ENCODE measurements at regions of chrX and their contacts with region 1.

Region 1: GRCh38 chrX:40013266-40014195 is 84.2 kb downstream of the BCOR start:
- DNase-seq: peak; percentile 88
- H3K4me3 ChIP-seq: peak overlapping the region; percentile 51 to 64 (median 58)
- H3K27ac ChIP-seq: peak overlapping the region; percentile 83 to 91 (median 90)
- H3K4me1 ChIP-seq: peaks cover 0 to 42% (median 14%) of the 10 kb centered on the region in 4 donors
- H3K27me3 ChIP-seq: peaks cover 0 to 4% (median 0%) of the 10 kb centered on the region in 3 donors
- CTCF ChIP-seq: no peak
- EP300 ChIP-seq: peak in 1 of 4 donors; percentile 22
- POLR2A ChIP-seq: no peak

Region 2: GRCh38 chrX:39730662-39731397 is 282.7 kb before region 1 on chrX:
- intact Hi-C with region 1: loop called (anchors 5 kb)
- DNase-seq: peak; percentile 94
- H3K4me3 ChIP-seq: no peak overlapping the region
- H3K27ac ChIP-seq: peak overlapping the region in 3 of 4 donors; percentile 63 to 67 (median 65)
- H3K4me1 ChIP-seq: peaks cover 0 to 37% (median 18%) of the 10 kb centered on the region in 4 donors
- H3K27me3 ChIP-seq: no peaks in the 10 kb centered on the region
- CTCF ChIP-seq: peak in 3 of 4 experiments; percentile 4 to 51 (median 21)
- EP300 ChIP-seq: peak; percentile 17 to 65 (median 37)
- POLR2A ChIP-seq: no peak

Region 3: DNA sequence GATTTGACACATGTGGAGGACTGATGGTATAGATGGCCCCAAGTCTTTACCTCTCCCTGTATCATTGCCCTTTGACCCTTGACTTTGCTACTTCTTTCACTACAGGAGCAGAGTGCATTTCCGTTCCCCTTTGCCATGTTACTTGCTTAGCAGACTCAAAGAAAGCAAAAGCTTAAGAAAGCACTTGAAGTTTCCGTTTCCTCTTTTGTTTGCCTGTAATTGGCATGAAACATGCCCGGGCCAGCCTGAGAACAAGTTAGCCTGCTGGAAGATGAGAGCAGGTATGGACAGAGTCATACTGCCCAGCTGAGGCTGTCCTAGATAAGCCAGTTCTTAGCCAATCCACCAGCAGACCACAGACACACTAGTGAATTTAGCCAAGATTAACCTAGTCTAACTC is 121.8 kb before region 1 on chrX:
- intact Hi-C with region 1: no loop called
- DNase-seq: no peak
- H3K4me3 ChIP-seq: no peak overlapping the region
- H3K27ac ChIP-seq: no peak overlapping the region
- H3K4me1 ChIP-seq: peaks cover 0 to 1% (median 0%) of the 10 kb centered on the region in 4 donors
- H3K27me3 ChIP-seq: no peaks in the 10 kb centered on the region
- CTCF ChIP-seq: no peak
- EP300 ChIP-seq: no peak
- POLR2A ChIP-seq: no peak

Region 4: DNA sequence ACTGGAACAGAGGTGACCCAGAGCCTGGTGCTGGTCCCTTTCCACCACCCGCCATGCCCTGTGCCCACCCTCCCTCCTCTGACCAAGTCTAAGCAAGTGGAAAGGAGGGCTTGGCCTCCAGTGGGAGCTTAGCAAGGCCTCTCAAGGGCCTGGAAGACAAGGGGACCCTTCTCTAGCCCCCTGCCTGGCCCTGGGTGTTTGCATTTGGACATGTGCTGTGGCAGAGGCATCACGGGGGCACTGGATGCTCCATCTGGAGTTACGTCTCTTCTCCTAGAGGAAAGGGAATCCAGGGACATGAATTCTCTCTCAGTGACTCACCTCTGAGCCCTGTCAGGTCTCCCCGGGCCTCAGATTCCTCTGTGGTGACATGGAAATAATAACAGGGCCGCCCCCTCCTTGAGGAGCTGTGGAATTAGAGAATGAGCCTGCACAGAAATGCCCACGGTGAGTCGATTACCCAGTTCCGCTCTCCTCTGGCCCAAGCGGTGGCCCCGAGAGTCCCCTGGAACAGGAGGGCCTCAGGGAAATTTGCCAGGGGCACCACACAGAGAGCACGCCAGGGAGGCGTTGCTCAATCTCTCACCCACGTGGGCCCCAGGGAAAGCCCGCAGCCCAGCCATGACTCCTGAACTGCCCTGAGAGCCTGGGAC is 105.4 kb before region 1 on chrX:
- intact Hi-C with region 1: loop called (anchors 2 kb)
- DNase-seq: peak; percentile 86
- H3K4me3 ChIP-seq: no peak overlapping the region
- H3K27ac ChIP-seq: peak overlapping the region; percentile 71 to 75 (median 72)
- H3K4me1 ChIP-seq: peaks cover 0 to 38% (median 19%) of the 10 kb centered on the region in 4 donors
- H3K27me3 ChIP-seq: peaks cover 0 to 2% (median 0%) of the 10 kb centered on the region in 3 donors
- CTCF ChIP-seq: no peak
- EP300 ChIP-seq: no peak
- POLR2A ChIP-seq: no peak

Region 5: DNA sequence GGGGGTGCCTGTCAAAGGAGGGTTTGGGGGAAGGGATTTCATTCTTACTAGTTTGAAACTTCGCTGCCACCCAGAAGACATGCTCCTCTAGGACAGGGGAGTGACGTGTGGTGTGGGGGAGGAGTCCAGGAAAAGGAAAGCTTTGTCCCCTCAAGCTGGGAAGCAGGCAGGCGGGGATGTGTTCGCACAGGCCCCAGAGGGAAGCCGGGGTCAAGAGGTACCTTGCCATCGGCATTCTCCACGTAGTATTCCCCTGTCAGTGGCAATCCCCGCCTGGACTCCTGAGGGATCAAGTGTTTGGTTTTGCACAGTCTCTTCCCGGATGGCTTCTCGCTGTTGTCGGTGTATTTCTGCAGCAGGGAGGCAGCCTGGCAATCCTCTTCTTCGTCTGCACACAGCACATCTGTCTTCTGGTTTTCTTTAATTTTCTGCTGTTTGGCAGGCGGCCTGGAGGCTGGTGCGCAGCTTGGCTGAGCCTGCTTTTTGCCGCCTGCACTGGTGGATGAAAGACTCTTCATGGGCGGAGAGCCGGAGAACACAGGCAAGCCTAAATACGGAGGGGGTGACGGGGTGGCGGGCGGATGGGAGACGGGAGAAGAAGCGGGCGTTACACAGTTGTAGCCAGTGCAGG is 49.1 kb after region 1 on chrX:
- intact Hi-C with region 1: loop called (anchors 2 kb)
- DNase-seq: peak; percentile 90
- H3K4me3 ChIP-seq: no peak overlapping the region
- H3K27ac ChIP-seq: peak overlapping the region in 3 of 4 donors; percentile 67 to 74 (median 74)
- H3K4me1 ChIP-seq: peaks cover 0 to 18% (median 16%) of the 10 kb centered on the region in 4 donors
- H3K27me3 ChIP-seq: no peaks in the 10 kb centered on the region
- CTCF ChIP-seq: no peak
- EP300 ChIP-seq: peak in 1 of 4 donors; percentile 34
- POLR2A ChIP-seq: no peak

Region 6: GRCh38 chrX:40097497-40098263 is 84.1 kb after region 1 on chrX and contains the start of gene BCOR:
- intact Hi-C with region 1: loop called (anchors 1 kb)
- DNase-seq: peak; percentile 90
- H3K4me3 ChIP-seq: peak within 1 kb of the TSS; percentile 56 to 80 (median 69)
- H3K27ac ChIP-seq: peak within 1 kb of the TSS; percentile 87 to 96 (median 92)
- H3K4me1 ChIP-seq: peaks cover 0 to 81% (median 26%) of the 10 kb centered on the region in 4 donors
- H3K27me3 ChIP-seq: peaks cover 0 to 21% (median 0%) of the 10 kb centered on the region in 3 donors
- CTCF ChIP-seq: no peak
- EP300 ChIP-seq: no peak
- POLR2A ChIP-seq: peak in 1 of 2 donors; percentile 22
- total RNA-seq, gene BCOR: 15.8 to 31.6 (median 23.0) TPM

Region 7: GRCh38 chrX:40266490-40267333 is 253.2 kb after region 1 on chrX:
- intact Hi-C with region 1: loop called (anchors 5 kb)
- DNase-seq: peak; percentile 83
- H3K4me3 ChIP-seq: peak overlapping the region; percentile 22 to 50 (median 46)
- H3K27ac ChIP-seq: peak overlapping the region; percentile 47 to 74 (median 67)
- H3K4me1 ChIP-seq: peaks cover 0 to 15% (median 4%) of the 10 kb centered on the region in 4 donors
- H3K27me3 ChIP-seq: peaks cover 0 to 3% (median 0%) of the 10 kb centered on the region in 3 donors
- CTCF ChIP-seq: peak in 3 of 4 experiments; percentile 52 to 60 (median 55)
- EP300 ChIP-seq: no peak
- POLR2A ChIP-seq: no peak